ENCODE measurements at regions of chr14 and their contacts with region 1.

Region 1: DNA sequence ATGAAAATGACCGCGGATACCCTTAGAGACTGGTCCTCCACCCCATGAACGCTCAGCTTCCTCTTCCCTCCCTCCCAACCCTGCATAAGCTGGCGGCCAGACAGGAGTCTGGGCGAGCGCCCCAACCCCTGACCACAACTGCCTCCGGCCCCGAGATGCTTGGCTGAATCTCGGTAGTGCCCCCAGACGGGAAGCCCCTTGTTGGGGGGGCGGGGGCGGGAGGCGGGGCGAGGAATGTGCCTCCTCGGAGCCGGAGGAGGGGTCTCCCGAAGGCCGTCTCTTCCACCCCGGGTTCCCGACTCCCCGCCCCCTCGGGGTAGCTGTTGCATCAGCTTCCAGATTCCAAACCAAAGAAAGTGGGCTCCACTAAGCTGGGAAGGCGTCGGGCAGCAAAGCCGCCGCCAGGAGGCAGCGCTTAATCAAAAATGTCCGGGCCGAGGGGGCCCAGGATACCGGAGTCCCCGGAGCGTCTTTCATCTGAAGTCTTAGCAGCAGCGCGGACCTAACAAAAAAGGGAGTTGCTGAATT is 7.1 kb upstream of the MRPL52 start:
- DNase-seq: peak; percentile 63
- H3K4me3 ChIP-seq: peak overlapping the region; percentile 9 to 15 (median 11)
- H3K27ac ChIP-seq: peak overlapping the region; percentile 50
- H3K4me1 ChIP-seq: peaks cover 45% of the 10 kb centered on the region
- H3K27me3 ChIP-seq: no peaks in the 10 kb centered on the region
- CTCF ChIP-seq: peak; percentile 74 to 85

Region 2: GRCh38 chr14:22598099-22598899 is 224.3 kb before region 1 on chr14 and contains the start of gene ABHD4:
- CTCF ChIA-PET with region 1: no interaction called
- dilution Hi-C with region 1: no loop called
- in situ Hi-C with region 1: no loop called
- intact Hi-C with region 1: no loop called
- DNase-seq: peak; percentile 65
- H3K4me3 ChIP-seq: peak within 1 kb of the TSS; percentile 77 to 91 (median 90)
- H3K27ac ChIP-seq: peak within 1 kb of the TSS; percentile 85
- H3K4me1 ChIP-seq: peaks cover 28% of the 10 kb centered on the region
- H3K27me3 ChIP-seq: no peaks in the 10 kb centered on the region
- CTCF ChIP-seq: no peak
- total RNA-seq, gene ABHD4: 16.7 to 20.5 TPM

Region 3: DNA sequence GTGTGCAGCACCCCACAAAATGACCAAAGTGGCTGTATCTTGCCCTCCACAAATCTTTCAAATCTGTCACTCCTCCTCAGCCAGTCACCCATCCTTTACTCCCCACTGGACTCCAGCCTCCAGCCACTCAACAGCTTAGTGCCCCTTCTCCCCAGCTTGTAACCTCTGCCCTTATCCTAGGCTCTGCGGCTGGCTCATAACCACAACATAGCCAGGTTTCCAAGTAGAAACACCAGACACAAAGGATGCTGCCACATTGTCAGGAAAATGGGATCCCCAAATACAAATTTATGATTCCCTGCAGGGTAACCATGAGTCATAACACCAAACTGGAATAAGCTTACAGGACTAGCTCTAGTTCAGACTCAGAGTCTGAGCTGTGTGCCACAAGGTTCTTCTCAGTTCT is 41.0 kb before region 1 on chr14:
- CTCF ChIA-PET with region 1: no interaction called
- dilution Hi-C with region 1: no loop called
- in situ Hi-C with region 1: no loop called
- intact Hi-C with region 1: loop called (anchors 1 kb)
- DNase-seq: peak; percentile 14
- H3K4me3 ChIP-seq: no peak overlapping the region
- H3K27ac ChIP-seq: no peak overlapping the region
- H3K4me1 ChIP-seq: no peaks in the 10 kb centered on the region
- H3K27me3 ChIP-seq: no peaks in the 10 kb centered on the region
- CTCF ChIP-seq: no peak

Region 4: GRCh38 chr14:22836301-22837113 is 13.9 kb after region 1 on chr14 and contains the start of gene MMP14:
- CTCF ChIA-PET with region 1: interaction called, 6 read pairs
- dilution Hi-C with region 1: no loop called
- in situ Hi-C with region 1: no loop called
- intact Hi-C with region 1: loop called (anchors 1 kb)
- DNase-seq: peak; percentile 86
- H3K4me3 ChIP-seq: peak within 1 kb of the TSS; percentile 84 to 94 (median 86)
- H3K27ac ChIP-seq: peak within 1 kb of the TSS; percentile 86
- H3K4me1 ChIP-seq: peaks cover 24% of the 10 kb centered on the region
- H3K27me3 ChIP-seq: no peaks in the 10 kb centered on the region
- CTCF ChIP-seq: peak in 1 of 2 donors; percentile 57
- total RNA-seq, gene MMP14: 525 to 766 TPM

Region 5: DNA sequence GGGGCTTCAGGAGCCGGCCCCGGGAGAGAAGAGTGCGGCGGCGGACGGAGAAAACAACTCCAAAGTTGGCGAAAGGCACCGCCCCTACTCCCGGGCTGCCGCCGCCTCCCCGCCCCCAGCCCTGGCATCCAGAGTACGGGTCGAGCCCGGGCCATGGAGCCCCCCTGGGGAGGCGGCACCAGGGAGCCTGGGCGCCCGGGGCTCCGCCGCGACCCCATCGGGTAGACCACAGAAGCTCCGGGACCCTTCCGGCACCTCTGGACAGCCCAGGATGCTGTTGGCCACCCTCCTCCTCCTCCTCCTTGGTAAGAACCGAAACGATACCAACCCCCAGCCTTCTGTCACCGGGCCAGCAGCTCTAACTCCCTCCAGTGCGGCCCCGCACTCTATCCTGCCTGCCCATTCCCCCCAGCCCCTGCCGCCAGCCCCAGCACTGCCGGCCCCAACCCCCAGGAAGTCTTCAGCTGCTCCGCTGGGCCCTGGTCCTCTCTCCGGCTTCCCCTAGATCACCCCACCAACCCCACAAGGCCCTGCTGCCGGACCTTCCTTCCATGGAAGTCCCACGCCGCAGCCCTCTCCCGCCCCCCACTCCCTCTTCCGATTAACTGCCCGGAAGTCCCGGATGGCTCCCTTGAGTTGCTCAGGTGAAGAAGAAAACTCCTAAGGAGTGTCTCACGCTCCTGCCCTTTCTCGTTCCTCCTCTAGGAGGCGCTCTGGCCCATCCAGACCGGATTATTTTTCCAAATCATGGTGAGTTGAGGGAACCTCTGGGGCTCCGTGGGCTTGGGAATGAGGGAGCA is 49.6 kb after region 1 on chr14:
- CTCF ChIA-PET with region 1: interaction called, 4 read pairs
- dilution Hi-C with region 1: no loop called
- in situ Hi-C with region 1: no loop called
- intact Hi-C with region 1: loop called (anchors 1 kb)
- DNase-seq: peak; percentile 85
- H3K4me3 ChIP-seq: peak overlapping the region; percentile 85 to 90 (median 87)
- H3K27ac ChIP-seq: peak overlapping the region; percentile 85
- H3K4me1 ChIP-seq: peaks cover 12% of the 10 kb centered on the region
- H3K27me3 ChIP-seq: no peaks in the 10 kb centered on the region
- CTCF ChIP-seq: peak; percentile 98

Region 6: DNA sequence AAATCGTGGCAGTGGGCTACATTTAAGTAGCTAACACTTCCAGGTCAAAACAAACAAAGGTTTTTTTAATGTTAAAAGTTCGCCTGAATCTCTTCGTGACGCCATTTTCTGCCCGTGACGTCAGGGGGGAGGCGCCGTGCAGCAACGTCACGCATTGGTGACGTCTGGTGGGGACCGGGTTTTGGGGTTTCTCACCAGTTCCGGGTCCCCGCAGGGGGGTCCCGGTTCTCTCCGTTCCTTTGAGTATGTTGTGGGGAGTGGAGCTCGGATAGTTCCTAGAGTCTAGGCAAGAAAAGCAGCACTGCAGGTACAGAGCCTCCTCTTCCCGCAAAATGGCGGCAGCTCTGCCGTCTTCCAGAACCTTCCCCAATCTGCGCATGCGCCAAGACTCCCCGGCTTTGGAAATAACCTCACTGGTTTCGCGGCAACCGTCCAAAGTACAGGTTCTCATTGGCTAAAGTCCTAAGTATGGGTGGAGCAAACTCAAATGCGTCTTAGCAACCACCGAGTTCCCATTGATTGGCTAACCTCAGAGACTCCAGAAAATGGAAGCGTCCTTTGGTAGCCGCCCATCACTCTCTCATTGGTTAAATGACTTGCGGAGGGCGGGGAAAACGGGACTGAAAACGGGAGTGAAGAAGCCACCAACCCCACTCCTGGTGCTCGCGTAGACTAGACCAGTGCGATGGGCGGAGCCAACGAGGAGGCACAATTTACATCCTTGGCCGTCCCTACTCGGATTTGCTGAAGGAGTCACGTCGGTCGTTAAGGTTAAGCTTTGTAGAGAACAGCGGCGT is 96.4 kb after region 1 on chr14 and contains the start of gene RBM23:
- CTCF ChIA-PET with region 1: no interaction called
- dilution Hi-C with region 1: no loop called
- in situ Hi-C with region 1: no loop called
- intact Hi-C with region 1: loop called (anchors 5 kb)
- DNase-seq: peak; percentile 100
- H3K4me3 ChIP-seq: peak within 1 kb of the TSS; percentile 70 to 99 (median 90)
- H3K27ac ChIP-seq: peak within 1 kb of the TSS; percentile 99
- H3K4me1 ChIP-seq: peaks cover 18% of the 10 kb centered on the region
- H3K27me3 ChIP-seq: no peaks in the 10 kb centered on the region
- CTCF ChIP-seq: no peak
- total RNA-seq, gene RBM23: 38.7 to 55.8 TPM

Region 7: DNA sequence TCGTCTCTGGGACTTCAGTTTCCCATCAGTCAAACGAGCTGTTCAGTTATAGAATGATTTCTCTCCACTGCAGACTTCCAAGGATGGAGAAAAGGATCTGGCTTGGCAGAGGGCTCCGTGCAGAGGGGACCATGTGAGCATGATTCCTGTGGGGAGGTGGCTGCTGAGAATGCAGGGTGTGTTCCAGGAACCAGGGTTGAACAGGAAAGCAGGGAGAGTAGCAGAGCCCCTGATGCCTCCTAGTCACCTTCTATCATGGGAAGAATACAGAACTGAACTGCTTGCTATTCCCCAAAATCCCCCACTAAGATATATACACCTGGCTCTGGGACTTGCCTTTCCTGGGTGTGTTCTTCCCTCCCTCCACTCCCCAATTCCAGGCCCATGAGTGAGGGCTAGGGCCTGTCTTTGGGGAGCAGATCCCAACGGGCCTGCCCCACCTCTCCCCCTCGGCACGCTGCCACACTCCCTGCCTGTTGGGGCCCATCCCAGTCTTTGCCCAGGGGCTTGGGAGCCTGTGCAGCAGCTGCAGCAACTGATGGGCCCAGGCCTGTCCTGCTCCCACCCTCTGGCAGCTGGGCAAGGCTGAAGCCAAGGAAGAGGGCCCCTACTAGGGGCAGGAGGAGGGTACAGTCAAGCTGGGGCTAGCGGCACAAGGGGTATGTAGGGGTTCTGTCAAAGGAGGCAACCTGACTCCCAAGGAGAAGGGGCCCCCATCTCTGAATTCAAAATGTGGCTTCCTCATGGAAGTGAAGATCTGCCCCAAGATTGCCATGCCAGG is 156.4 kb after region 1 on chr14:
- CTCF ChIA-PET with region 1: interaction called, 3 read pairs
- dilution Hi-C with region 1: no loop called
- in situ Hi-C with region 1: no loop called
- intact Hi-C with region 1: loop called (anchors 1 kb)
- DNase-seq: peak; percentile 95
- H3K4me3 ChIP-seq: peak overlapping the region; percentile 64 to 76 (median 65)
- H3K27ac ChIP-seq: peak overlapping the region; percentile 84
- H3K4me1 ChIP-seq: peaks cover 45% of the 10 kb centered on the region
- H3K27me3 ChIP-seq: no peaks in the 10 kb centered on the region
- CTCF ChIP-seq: peak in 1 of 2 donors; percentile 13

Region 8: DNA sequence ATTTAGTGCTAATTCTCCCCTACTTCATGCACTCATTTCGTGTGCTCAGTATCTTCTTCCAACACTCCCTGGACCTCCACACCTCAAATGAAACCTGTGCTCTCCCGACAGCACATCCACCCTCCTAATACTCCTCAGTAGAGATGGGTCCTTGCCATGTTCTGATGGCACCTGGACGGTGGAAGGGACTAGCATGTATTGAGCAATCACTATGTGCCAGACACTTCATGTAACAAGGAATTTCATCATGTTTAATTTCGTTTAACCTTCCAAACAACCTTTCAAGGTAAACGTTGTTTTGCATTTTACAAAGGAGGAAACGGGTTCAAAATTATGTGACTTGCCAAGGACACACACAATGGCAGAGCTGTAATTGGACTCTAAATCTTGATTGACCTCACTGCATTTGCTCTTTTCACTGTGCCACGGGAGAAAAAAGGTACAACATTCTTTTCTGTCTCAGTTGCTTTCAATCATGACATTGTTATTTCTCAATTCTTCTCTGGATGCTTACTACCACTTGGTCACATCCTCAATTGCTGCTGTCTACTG is 373.0 kb after region 1 on chr14:
- CTCF ChIA-PET with region 1: no interaction called
- dilution Hi-C with region 1: no loop called
- in situ Hi-C with region 1: no loop called
- intact Hi-C with region 1: no loop called
- DNase-seq: no peak
- H3K4me3 ChIP-seq: no peak overlapping the region
- H3K27ac ChIP-seq: no peak overlapping the region
- H3K4me1 ChIP-seq: no peaks in the 10 kb centered on the region
- H3K27me3 ChIP-seq: no peaks in the 10 kb centered on the region
- CTCF ChIP-seq: no peak